ENCODE measurements at regions of chr17 and their contacts with region 1.

Region 1: DNA sequence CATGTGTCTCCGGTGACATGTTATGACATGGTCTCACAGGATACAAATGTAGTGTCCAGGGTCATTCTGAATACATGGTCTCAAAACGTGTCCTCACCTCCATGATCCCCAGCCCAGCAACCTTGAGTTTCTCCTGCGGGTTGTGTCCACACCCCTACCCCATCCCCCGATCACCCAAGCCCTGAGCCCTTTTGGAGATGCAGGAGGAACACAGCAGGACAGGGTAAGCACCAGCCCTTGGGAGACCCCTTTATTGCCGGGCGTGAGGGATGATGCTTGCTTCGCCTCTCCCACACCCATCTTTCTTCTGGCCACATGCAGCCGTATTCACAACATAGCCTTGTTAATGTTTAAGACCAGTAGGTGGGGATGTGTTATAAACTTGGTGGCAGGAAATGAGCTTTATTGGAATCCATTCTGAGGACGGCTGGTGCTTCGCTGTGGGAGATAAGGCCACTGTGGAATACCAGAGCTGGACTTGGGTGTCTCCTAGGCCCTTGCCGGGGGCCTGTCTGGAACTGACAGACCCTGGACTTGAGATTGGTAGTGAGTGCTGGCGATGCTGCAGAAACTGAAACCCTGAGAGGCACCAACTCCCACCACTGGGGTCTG is 5.5 kb downstream of the TMEM132E start:
- DNase-seq: no peak
- ATAC-seq: no peak
- H3K4me3 ChIP-seq: no peak overlapping the region
- H3K27ac ChIP-seq: no peak overlapping the region
- H3K4me1 ChIP-seq: no peaks in the 10 kb centered on the region
- H3K27me3 ChIP-seq: no peaks in the 10 kb centered on the region

Region 2: DNA sequence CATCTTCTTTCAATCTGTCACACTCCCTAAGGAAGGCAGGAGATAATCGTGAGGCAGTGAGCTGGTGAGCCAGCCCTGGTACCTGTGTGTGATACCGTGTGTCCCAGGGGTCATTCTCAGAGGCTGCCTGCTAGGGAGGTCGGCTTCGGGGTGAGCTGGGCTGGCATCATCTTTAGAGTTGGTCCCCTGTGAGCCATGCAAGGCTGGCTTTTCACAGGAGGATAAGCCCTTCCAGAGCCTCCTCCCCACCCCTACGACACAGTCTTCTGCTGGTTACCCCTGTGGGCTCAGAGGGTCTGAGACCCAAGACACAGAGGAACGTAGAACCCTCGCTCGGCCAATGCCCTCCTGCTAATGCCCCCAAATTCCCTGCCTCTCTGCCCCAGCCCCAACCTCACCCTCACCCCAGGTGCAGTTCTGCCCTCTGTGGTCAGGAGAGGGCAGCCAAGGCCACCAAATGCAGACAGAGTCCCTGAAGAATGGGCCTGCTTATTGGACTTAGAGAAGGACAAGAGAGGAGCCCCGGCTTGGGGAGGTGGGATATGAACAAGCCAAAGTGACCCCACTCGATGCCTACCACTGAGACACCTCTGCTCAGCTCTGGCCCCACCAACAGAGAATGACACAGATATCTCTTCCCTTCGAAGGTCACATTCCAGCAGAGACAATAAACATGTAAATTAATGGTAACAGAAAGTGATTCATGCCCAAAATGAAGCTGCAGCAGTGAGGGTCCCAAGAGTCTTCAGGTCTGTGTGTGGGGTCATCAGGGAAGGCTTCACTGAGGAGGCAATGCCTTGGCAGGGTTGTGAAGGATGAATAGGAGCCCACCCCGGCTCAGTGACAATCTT is 141.1 kb before region 1 on chr17:
- intact Hi-C with region 1: loop called in 1 of 4 experiments (anchors 10 kb)
- DNase-seq: peak in 2 of 3 donors; percentile 15 to 62
- ATAC-seq: peak; percentile 48 to 59
- H3K4me3 ChIP-seq: no peak overlapping the region
- H3K27ac ChIP-seq: no peak overlapping the region
- H3K4me1 ChIP-seq: no peaks in the 10 kb centered on the region
- H3K27me3 ChIP-seq: no peaks in the 10 kb centered on the region

Region 3: GRCh38 chr17:34519282-34519681 is 65.6 kb before region 1 on chr17:
- intact Hi-C with region 1: no loop called
- DNase-seq: peak in 1 of 3 donors; percentile 18
- ATAC-seq: peak; percentile 29 to 56
- H3K4me3 ChIP-seq: no peak overlapping the region
- H3K27ac ChIP-seq: no peak overlapping the region
- H3K4me1 ChIP-seq: no peaks in the 10 kb centered on the region
- H3K27me3 ChIP-seq: no peaks in the 10 kb centered on the region

Measured in right cardiac atrium (tissue), 5 donors.